Gastrocnemius medialis (tissue), 4 donors: ENCODE measurements at regions of chr11 and their contacts with region 1.

Region 1: GRCh38 chr11:57499413-57499982 is 16.0 kb downstream of the SLC43A1 start:
- DNase-seq: peak; percentile 98 to 99
- ATAC-seq: peak; percentile 90 to 91
- H3K4me3 ChIP-seq: peak overlapping the region; percentile 29 to 53 (median 44)
- H3K27ac ChIP-seq: peak overlapping the region; percentile 87 to 95 (median 92)
- H3K4me1 ChIP-seq: peaks cover 30 to 40% of the 10 kb centered on the region in 2 donors
- H3K27me3 ChIP-seq: no peaks in the 10 kb centered on the region
- CTCF ChIP-seq: peak in 2 of 5 experiments; percentile 28 to 34
- POLR2A ChIP-seq: peak; percentile 67 to 81

Region 2: GRCh38 chr11:57515332-57516060 is 16.0 kb after region 1 on chr11 and contains the start of gene SLC43A1:
- in situ Hi-C with region 1: no loop called
- intact Hi-C with region 1: loop called (anchors 2 kb)
- DNase-seq: peak; percentile 43 to 60
- ATAC-seq: peak; percentile 78 to 83
- H3K4me3 ChIP-seq: peak within 1 kb of the TSS; percentile 80 to 100 (median 91)
- H3K27ac ChIP-seq: peak within 1 kb of the TSS; percentile 80 to 93 (median 86)
- H3K4me1 ChIP-seq: peaks cover 9 to 17% of the 10 kb centered on the region in 2 donors
- H3K27me3 ChIP-seq: no peaks in the 10 kb centered on the region
- CTCF ChIP-seq: no peak
- POLR2A ChIP-seq: peak; percentile 46 to 54
- total RNA-seq, gene SLC43A1: 7.4 to 35.1 (median 15.8) TPM